ENCODE measurements at regions of chr3 and their contacts with region 1.

Region 1: GRCh38 chr3:97719156-97719821 is 45.3 kb upstream of the ARL6 start:
- DNase-seq: peak; percentile 8 to 76 (median 57)
- ATAC-seq: peak; percentile 94
- H3K4me3 ChIP-seq: no peak overlapping the region
- H3K4me3 Mint-ChIP-seq: no peak overlapping the region
- H3K27ac ChIP-seq: no peak overlapping the region
- H3K27ac Mint-ChIP-seq: no peak overlapping the region
- H3K4me1 ChIP-seq: no peaks in the 10 kb centered on the region
- H3K4me1 Mint-ChIP-seq: peaks cover 2% of the 10 kb centered on the region
- H3K27me3 ChIP-seq: no peaks in the 10 kb centered on the region
- H3K27me3 Mint-ChIP-seq: peaks cover 3% of the 10 kb centered on the region
- CTCF ChIP-seq: peak; percentile 95

Region 2: GRCh38 chr3:96863129-96863740 is 856.1 kb before region 1 on chr3:
- CTCF ChIA-PET with region 1: no interaction called
- POLR2A ChIA-PET with region 1: no interaction called
- intact Hi-C with region 1: loop called in 1 of 2 experiments (anchors 5 kb)
- DNase-seq: no peak
- ATAC-seq: no peak
- H3K4me3 ChIP-seq: no peak overlapping the region
- H3K4me3 Mint-ChIP-seq: no peak overlapping the region
- H3K27ac ChIP-seq: no peak overlapping the region
- H3K27ac Mint-ChIP-seq: no peak overlapping the region
- H3K4me1 ChIP-seq: no peaks in the 10 kb centered on the region
- H3K4me1 Mint-ChIP-seq: no peaks in the 10 kb centered on the region
- H3K27me3 ChIP-seq: no peaks in the 10 kb centered on the region
- H3K27me3 Mint-ChIP-seq: no peaks in the 10 kb centered on the region
- CTCF ChIP-seq: no peak

Region 3: DNA sequence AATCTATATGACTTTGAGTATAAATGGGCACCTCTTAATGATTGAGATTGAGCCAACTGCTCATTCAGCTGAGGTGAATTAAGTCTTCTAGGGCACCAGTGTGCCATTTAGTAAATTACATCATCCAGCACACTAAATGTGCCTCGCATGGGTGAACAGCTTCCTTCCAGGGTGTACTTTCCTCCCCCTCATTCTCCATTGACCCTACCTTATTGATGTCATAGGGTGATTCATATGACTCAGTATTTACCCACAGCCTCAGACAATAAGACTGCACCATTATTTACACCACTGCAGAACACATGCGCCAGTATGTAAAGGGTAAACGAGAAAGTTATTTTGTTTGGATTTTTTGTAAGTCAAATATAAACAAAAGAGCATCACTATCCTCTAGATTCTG is 139.9 kb before region 1 on chr3:
- CTCF ChIA-PET with region 1: no interaction called
- POLR2A ChIA-PET with region 1: no interaction called
- intact Hi-C with region 1: no loop called
- DNase-seq: no peak
- ATAC-seq: no peak
- H3K4me3 ChIP-seq: no peak overlapping the region
- H3K4me3 Mint-ChIP-seq: no peak overlapping the region
- H3K27ac ChIP-seq: no peak overlapping the region
- H3K27ac Mint-ChIP-seq: no peak overlapping the region
- H3K4me1 ChIP-seq: no peaks in the 10 kb centered on the region
- H3K4me1 Mint-ChIP-seq: no peaks in the 10 kb centered on the region
- H3K27me3 ChIP-seq: no peaks in the 10 kb centered on the region
- H3K27me3 Mint-ChIP-seq: no peaks in the 10 kb centered on the region
- CTCF ChIP-seq: no peak

Region 4: DNA sequence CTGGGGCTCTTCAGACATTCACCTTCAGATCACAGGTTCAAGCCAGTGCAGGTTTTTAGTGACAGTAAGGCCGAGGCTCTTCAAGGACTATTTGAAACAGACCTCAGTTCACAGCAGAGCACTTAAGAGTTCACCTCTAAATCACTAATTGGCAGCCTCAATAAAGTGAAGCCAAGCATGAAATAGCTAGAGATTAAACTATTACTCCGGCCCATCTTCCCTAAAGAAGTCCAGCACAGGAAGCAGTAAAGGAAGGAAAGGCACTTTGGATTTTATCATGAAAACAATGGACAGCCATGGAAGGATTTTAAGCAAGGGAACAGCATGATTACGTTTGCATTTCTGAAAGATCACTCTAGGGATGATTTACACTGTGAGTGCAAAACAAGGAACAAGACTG is 17.6 kb after region 1 on chr3:
- CTCF ChIA-PET with region 1: interaction called, 13 read pairs
- POLR2A ChIA-PET with region 1: no interaction called
- intact Hi-C with region 1: no loop called
- DNase-seq: no peak
- ATAC-seq: no peak
- H3K4me3 ChIP-seq: no peak overlapping the region
- H3K4me3 Mint-ChIP-seq: no peak overlapping the region
- H3K27ac ChIP-seq: no peak overlapping the region
- H3K27ac Mint-ChIP-seq: no peak overlapping the region
- H3K4me1 ChIP-seq: no peaks in the 10 kb centered on the region
- H3K4me1 Mint-ChIP-seq: no peaks in the 10 kb centered on the region
- H3K27me3 ChIP-seq: peaks cover 0 to 2% of the 10 kb centered on the region in 2 experiments
- H3K27me3 Mint-ChIP-seq: peaks cover 17% of the 10 kb centered on the region
- CTCF ChIP-seq: no peak

Region 5: DNA sequence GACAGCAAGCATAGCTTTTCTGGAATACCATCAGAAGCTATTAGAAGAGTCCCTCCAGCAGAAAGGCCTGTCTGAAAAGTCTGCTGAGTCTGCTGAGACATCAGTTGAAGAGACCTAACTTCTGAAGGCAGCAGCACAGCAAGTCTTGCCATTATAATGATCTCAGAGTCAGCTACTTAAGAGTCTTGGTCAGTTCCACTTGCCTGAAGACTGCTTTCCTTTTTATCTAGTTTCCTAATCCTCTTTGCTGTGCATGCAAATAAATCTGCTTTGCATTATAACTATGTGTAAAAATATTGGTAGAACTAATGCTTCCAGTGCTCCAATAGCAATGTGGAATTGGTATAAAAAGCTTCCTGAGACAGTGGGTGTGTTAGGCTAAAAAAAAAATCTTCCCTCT is 909.0 kb after region 1 on chr3:
- CTCF ChIA-PET with region 1: no interaction called
- POLR2A ChIA-PET with region 1: no interaction called
- intact Hi-C with region 1: no loop called
- DNase-seq: no peak
- ATAC-seq: no peak
- H3K4me3 ChIP-seq: no peak overlapping the region
- H3K4me3 Mint-ChIP-seq: no peak overlapping the region
- H3K27ac ChIP-seq: no peak overlapping the region
- H3K27ac Mint-ChIP-seq: no peak overlapping the region
- H3K4me1 ChIP-seq: no peaks in the 10 kb centered on the region
- H3K4me1 Mint-ChIP-seq: no peaks in the 10 kb centered on the region
- H3K27me3 ChIP-seq: no peaks in the 10 kb centered on the region
- H3K27me3 Mint-ChIP-seq: no peaks in the 10 kb centered on the region
- CTCF ChIP-seq: no peak

Measured in CD8-positive, alpha-beta T cell (primary cell).